Transverse colon (tissue), 4 donors: ENCODE measurements at regions of chr11 and their contacts with region 1.

Region 1: DNA sequence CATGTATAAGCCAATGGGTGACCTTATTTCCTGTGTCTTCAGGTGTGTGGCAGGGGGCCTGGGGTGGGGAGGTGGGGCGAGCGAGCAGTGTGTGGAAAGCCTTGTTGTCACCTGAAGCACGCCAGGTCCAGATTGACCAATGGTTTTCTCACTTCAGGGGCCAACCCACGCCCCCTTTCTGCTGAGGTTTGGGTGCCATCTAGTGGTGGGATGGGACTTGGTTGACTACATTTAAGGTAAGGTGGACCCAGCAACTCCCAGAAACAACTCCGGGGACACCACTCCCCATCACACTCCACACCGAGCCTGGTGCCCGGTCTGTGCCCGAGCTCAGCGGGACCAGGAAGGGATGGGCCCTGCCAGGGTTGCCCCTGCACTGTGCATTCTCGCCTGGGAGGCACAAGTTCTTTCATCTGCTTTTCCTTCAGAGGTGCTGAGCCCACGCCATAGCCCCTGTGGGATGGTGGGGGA is 40.0 kb downstream of the TPCN2 start:
- DNase-seq: peak; percentile 79
- H3K4me3 ChIP-seq: no peak overlapping the region
- H3K27ac ChIP-seq: peak overlapping the region in 3 of 4 donors; percentile 70 to 85 (median 73)
- H3K4me1 ChIP-seq: peaks cover 0 to 14% (median 4%) of the 10 kb centered on the region in 4 donors
- H3K27me3 ChIP-seq: no peaks in the 10 kb centered on the region
- CTCF ChIP-seq: peak; percentile 71 to 75 (median 72)
- EP300 ChIP-seq: no peak
- POLR2A ChIP-seq: no peak

Region 2: GRCh38 chr11:68905421-68906360 is 183.0 kb before region 1 on chr11:
- in situ Hi-C with region 1: no loop called
- intact Hi-C with region 1: loop called (anchors 5 kb)
- DNase-seq: no peak
- H3K4me3 ChIP-seq: peak overlapping the region in 1 of 4 donors; percentile 78
- H3K27ac ChIP-seq: peak overlapping the region in 1 of 4 donors; percentile 87
- H3K4me1 ChIP-seq: peaks cover 6 to 28% (median 21%) of the 10 kb centered on the region in 4 donors
- H3K27me3 ChIP-seq: no peaks in the 10 kb centered on the region
- CTCF ChIP-seq: no peak
- EP300 ChIP-seq: no peak
- POLR2A ChIP-seq: no peak

Region 3: GRCh38 chr11:68974421-68975194 is 114.1 kb before region 1 on chr11:
- in situ Hi-C with region 1: no loop called
- intact Hi-C with region 1: no loop called
- DNase-seq: peak; percentile 6
- H3K4me3 ChIP-seq: no peak overlapping the region
- H3K27ac ChIP-seq: no peak overlapping the region
- H3K4me1 ChIP-seq: no peaks in the 10 kb centered on the region
- H3K27me3 ChIP-seq: peaks cover 10% of the 10 kb centered on the region
- CTCF ChIP-seq: no peak
- EP300 ChIP-seq: no peak
- POLR2A ChIP-seq: no peak

Region 4: GRCh38 chr11:69337211-69337721 is 248.6 kb after region 1 on chr11:
- in situ Hi-C with region 1: no loop called
- intact Hi-C with region 1: no loop called
- DNase-seq: peak; percentile 70
- H3K4me3 ChIP-seq: no peak overlapping the region
- H3K27ac ChIP-seq: peak overlapping the region; percentile 74 to 85 (median 78)
- H3K4me1 ChIP-seq: peaks cover 0 to 14% (median 8%) of the 10 kb centered on the region in 4 donors
- H3K27me3 ChIP-seq: no peaks in the 10 kb centered on the region
- CTCF ChIP-seq: no peak
- EP300 ChIP-seq: no peak
- POLR2A ChIP-seq: no peak